Right cardiac atrium (tissue), 5 donors: ENCODE measurements at regions of chr10 and their contacts with region 1.

Region 1: DNA sequence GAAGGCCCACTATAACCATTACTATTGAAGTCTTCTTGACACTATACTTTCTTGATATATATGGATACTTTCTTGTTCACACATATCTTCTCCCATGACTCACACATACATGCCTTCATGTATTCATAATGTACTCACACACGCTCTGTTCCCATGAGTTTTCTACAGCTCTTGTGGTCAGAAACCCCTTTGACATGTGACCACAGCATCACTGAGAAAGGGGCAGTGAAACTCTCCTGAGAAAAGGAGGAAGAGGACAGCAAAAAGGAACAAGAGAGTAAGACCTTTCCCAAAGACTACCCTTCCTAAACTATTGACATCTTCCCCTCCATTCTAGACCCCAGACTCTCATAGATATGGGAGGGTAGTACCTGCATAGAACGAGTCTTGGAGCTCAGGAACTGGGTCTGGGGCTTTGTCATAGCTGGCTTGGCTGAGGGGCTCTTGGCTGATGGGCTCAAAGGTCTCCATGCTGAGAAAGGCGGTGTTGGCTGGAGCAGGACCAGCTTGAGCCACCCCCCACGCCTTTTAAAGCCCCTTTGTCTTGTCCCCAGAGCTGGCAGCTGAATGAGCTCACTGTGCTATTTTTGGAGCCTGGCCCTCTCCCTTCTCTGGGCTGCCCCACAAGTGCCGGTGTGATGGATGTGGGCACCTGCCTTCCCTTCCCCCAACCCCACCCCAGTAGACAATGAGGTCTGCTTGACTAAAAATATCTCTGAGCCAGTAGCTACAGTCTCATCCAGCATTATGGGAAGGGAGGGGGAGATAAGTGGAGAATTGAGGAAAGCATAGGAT is 5.1 kb downstream of the SYNPO2L start:
- DNase-seq: peak; percentile 40 to 82 (median 73)
- ATAC-seq: peak; percentile 44 to 51
- H3K4me3 ChIP-seq: no peak overlapping the region
- H3K27ac ChIP-seq: peak overlapping the region; percentile 99
- H3K4me1 ChIP-seq: peaks cover 5% of the 10 kb centered on the region
- H3K27me3 ChIP-seq: no peaks in the 10 kb centered on the region

Region 2: DNA sequence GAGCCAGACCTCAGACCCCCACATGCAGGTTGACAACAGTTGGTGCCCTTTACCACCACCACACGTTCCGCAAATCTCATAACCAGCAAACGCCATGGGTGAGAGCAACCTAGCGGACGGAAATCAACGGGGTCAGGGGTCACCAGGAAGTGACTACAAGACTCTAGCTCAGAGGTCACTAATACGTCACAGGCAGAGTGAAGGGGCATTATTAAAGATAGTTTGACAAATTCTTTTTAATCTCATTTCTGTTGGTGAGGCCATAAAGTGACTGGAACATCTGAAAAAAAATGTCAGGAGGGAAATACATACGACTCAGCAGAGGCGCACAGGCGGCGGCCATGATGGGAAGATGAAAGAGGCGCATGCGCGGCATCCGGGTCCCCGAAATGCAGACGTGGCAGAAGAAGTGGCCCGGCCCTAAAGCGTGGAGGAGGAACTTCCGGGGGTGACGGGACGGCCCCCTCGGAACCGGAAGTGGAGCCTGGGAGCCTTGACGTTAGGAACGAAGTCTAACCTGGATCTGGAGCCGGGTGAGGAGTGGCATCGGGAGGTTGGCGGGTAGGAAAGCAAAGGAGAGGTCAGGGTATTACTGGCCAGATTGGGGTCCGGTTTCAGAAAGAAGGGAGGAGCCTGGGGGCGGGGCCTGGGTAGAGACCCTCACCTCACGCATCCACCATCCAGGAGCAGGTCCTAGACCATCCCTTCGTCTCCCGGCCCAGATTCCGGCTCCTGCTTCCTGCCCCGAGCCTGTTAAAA is 93.3 kb after region 1 on chr10 and contains the start of gene SEC24C:
- intact Hi-C with region 1: loop called in 1 of 4 experiments (anchors 5 kb)
- DNase-seq: peak; percentile 97 to 99 (median 98)
- ATAC-seq: peak; percentile 96 to 97
- H3K4me3 ChIP-seq: peak within 1 kb of the TSS; percentile 80
- H3K27ac ChIP-seq: peak within 1 kb of the TSS; percentile 92
- H3K4me1 ChIP-seq: peaks cover 5% of the 10 kb centered on the region
- H3K27me3 ChIP-seq: no peaks in the 10 kb centered on the region
- total RNA-seq, gene SEC24C: 43.7 to 50.9 (median 46.2) TPM